Mammary epithelial cell (primary cell): ENCODE measurements at regions of chr12 and their contacts with region 1.

Region 1: GRCh38 chr12:47963340-47964040 is at the start of gene TMEM106C:
- DNase-seq: peak; percentile 82
- H3K4me3 ChIP-seq: peak within 1 kb of the TSS; percentile 60 to 71 (median 70)
- H3K27ac ChIP-seq: no peak within 1 kb of the TSS
- H3K4me1 ChIP-seq: peaks cover 15% of the 10 kb centered on the region
- H3K27me3 ChIP-seq: no peaks in the 10 kb centered on the region
- CTCF ChIP-seq: peak; percentile 84 to 100
- total RNA-seq, gene TMEM106C: 82.5 to 90.2 TPM

Region 2: DNA sequence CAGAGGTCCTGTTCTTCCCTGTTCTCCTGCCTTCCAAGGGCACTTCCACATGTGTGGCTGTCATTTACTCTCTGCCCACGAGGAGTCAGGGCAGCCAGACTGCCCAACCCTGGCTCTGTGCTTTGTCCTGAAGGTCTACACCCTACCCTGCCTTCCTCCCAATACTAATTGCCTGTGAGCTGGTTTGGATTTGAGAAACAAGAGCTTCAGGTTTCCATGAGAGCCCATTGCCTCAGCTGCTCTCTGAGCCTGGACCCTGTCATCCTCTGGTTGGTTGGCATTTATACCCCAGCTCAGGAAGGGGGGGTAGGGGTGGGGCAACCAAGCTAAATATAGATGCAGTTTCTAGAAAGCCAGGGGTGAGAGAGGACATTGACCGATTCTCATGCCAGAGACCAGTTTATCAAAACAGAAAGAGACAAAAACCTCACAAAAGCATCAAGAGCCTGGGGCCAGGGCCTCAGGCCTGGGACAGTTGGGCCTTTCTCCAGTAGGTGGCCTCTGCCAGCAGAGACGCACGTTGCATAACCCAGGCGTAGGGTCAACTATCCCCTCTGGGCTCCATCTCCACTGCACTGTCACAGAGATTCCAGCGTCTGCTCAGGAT is 93.2 kb before region 1 on chr12:
- CTCF ChIA-PET with region 1: no interaction called
- dilution Hi-C with region 1: loop called (anchors 10 kb)
- in situ Hi-C with region 1: no loop called
- intact Hi-C with region 1: no loop called
- DNase-seq: no peak
- H3K4me3 ChIP-seq: no peak overlapping the region
- H3K27ac ChIP-seq: no peak overlapping the region
- H3K4me1 ChIP-seq: peaks cover 10% of the 10 kb centered on the region
- H3K27me3 ChIP-seq: no peaks in the 10 kb centered on the region
- CTCF ChIP-seq: peak; percentile 19 to 46

Region 3: DNA sequence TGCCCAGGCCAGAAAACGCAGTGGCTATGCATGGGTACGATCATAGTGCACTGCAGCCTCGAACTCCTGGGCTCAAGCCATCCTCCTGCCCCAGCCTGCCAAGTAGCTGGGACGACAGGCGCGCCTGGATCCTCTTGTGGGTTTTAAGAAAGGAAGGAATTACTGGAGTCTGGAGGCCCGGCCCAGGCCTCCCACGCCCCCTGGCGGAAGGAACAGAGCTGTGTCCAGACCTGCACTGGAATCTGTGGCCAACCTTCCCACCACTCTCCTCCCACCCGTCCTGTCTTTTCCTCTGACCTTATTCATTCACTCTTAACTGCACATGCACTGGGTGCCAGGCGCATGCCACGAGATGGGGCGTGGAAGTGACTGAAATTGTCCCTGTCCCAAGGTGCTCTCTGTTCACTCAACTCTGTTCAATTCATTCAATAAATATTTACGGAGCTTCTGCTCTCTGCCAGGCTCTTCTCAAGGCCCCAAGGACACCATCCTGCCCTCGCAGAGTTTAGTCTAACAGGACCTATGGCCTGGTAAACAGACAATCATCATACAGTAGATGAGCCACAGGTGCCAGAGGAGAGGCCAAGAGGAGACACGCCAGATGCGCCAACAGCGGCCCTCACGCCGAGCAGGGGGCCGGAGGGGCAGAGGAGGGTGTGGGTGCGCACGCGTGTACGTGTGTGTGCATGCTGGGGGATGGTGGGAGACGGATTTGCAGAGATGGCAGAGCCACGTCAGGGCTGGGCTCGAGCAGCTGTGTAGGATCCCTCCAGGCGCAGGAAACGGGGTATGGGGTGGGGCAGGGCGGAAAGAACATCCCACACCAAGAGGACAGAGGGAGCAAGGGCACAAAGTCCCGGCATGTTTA is 13.8 kb before region 1 on chr12:
- CTCF ChIA-PET with region 1: interaction called, 7 read pairs
- dilution Hi-C with region 1: no loop called
- in situ Hi-C with region 1: no loop called
- intact Hi-C with region 1: loop called (anchors 1 kb)
- DNase-seq: peak; percentile 78
- H3K4me3 ChIP-seq: no peak overlapping the region
- H3K27ac ChIP-seq: peak overlapping the region; percentile 78
- H3K4me1 ChIP-seq: peaks cover 84% of the 10 kb centered on the region
- H3K27me3 ChIP-seq: no peaks in the 10 kb centered on the region
- CTCF ChIP-seq: peak; percentile 81 to 96

Region 4: DNA sequence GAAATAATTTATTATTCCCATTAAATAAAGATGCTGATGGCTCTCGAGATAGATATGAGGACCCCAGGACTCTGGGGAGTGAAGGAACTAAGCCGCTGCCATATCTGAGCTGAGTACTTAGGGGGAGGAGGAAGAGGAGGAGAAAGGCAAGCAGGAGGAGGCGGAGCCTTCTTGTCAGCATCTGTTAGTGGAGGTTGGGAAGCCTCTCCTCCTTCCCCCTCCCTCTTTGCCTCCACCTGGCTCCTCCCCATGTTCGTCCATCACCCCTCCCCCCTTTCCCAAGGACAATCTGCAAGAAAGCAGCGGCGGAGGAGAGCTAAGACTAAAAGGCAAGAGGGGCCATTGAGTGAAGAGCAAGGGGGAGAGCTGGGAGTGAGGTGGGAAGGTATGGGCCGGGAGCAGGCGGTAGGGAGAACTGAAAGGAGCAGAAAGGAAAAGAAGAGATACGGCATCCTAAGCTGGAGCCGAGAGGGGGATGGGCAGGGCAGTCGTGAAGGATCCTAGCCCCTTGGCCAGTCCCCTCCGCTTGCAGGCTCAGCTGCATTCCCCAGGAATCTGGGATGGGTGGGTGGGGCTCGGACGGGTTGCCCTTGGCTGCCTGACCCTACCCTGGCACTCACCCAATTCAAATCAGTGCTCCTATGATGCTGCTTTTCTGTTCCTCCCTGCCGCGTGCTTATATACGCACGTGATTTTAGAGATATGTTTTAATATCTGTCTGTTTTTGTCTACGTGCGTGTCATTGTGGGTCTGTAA is 155.8 kb after region 1 on chr12 and contains the start of gene PFKM:
- CTCF ChIA-PET with region 1: no interaction called
- dilution Hi-C with region 1: no loop called
- in situ Hi-C with region 1: no loop called
- intact Hi-C with region 1: no loop called
- DNase-seq: peak; percentile 84
- H3K4me3 ChIP-seq: peak within 1 kb of the TSS; percentile 73 to 93 (median 90)
- H3K27ac ChIP-seq: peak within 1 kb of the TSS; percentile 30
- H3K4me1 ChIP-seq: peaks cover 11% of the 10 kb centered on the region
- H3K27me3 ChIP-seq: no peaks in the 10 kb centered on the region
- CTCF ChIP-seq: no peak
- total RNA-seq, gene PFKM: 63.2 to 82.0 TPM

Region 5: DNA sequence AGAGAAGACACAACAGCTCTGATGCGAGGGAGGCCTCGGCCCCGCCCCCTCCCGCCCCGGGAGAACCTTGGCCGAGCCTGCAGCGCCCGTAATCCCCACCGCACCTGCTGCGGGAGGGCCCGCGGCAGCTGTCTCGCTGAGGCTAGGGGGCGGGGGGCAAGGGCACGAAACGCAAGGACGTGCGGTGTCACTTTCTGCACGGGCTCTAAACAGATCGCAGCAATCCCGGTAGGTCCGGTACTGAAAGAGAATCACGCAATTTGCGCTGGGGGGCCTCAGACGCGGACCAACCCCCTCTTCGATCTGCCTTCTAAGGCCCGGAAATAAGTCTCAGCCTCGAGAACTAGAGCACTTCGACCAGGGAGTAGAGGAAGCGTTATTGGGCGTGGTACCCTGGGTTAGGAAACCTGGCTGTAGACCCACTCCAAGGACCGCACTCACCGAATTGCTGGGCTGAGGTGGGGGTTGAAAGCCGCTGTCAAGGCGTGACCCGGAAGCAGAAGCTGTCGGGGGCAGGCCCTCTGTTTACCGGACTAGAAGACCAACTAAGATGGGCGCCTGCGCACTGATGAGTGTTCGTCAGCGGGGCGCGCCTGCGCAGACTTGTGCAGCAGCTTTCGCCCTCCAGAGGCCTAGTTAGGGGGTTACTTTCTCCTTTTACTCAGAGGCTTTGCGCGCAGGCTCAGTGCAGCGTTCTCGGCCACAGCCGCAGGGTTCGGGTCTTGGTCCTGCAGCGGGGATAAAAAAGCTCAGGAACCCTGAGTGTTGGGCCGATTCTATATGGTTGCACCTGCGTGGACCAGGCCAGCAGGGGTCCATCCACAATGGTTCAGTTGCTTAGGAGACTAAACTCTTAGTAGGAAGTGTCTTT is 193.8 kb after region 1 on chr12 and contains the start of gene ASB8:
- CTCF ChIA-PET with region 1: no interaction called
- dilution Hi-C with region 1: loop called (anchors 25 kb)
- in situ Hi-C with region 1: no loop called
- intact Hi-C with region 1: no loop called
- DNase-seq: peak; percentile 94
- H3K4me3 ChIP-seq: peak within 1 kb of the TSS; percentile 63 to 92 (median 83)
- H3K27ac ChIP-seq: peak within 1 kb of the TSS; percentile 41
- H3K4me1 ChIP-seq: peaks cover 6% of the 10 kb centered on the region
- H3K27me3 ChIP-seq: no peaks in the 10 kb centered on the region
- CTCF ChIP-seq: peak; percentile 34 to 51
- total RNA-seq, gene ASB8: 20.4 to 20.7 TPM

Region 6: GRCh38 chr12:48189331-48190125 is 226.0 kb after region 1 on chr12:
- CTCF ChIA-PET with region 1: no interaction called
- dilution Hi-C with region 1: no loop called
- in situ Hi-C with region 1: no loop called
- intact Hi-C with region 1: loop called (anchors 5 kb)
- DNase-seq: peak; percentile 55
- H3K4me3 ChIP-seq: no peak overlapping the region
- H3K27ac ChIP-seq: no peak overlapping the region
- H3K4me1 ChIP-seq: peaks cover 7% of the 10 kb centered on the region
- H3K27me3 ChIP-seq: peaks cover 3% of the 10 kb centered on the region
- CTCF ChIP-seq: peak; percentile 83 to 86